Colonic mucosa (tissue), 4 donors: ENCODE measurements at regions of chr9 and their contacts with region 1.

Region 1: DNA sequence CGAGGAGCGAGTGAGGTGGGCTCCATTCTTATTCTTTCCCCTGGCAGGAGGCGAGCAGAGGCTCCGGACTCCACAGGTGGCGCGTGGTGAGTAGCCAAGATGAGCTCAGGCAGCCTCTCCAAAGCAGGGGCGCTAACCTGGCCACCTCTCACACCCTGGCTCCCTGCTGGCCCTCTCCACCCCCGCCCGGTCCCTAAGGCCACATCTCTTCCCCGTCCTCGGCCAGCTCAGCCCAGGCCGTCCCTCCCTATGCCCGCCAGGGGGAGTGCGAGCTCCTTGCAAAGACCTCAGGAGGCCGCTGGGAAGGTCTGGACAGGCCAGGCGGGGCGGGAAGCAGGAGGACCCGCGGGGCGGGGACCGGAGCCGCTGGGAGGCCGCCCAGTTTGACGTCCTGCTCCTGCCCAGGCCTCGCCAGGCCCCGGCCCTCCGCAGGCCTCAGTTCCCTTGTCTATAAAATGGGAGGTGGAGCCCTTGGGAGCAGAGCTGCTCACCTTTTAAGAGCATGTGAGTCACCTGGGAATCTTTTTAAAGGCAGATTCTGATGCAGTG is 46.3 kb upstream of the GGTA1 start:
- DNase-seq: peak; percentile 96
- H3K4me3 ChIP-seq: no peak overlapping the region
- H3K27ac ChIP-seq: no peak overlapping the region
- H3K4me1 ChIP-seq: peaks cover 4% of the 10 kb centered on the region
- H3K27me3 ChIP-seq: no peaks in the 10 kb centered on the region
- CTCF ChIP-seq: peak; percentile 79

Region 2: GRCh38 chr9:121686930-121687541 is 141.1 kb after region 1 on chr9:
- intact Hi-C with region 1: loop called (anchors 5 kb)
- DNase-seq: peak; percentile 90
- H3K4me3 ChIP-seq: no peak overlapping the region
- H3K27ac ChIP-seq: no peak overlapping the region
- H3K4me1 ChIP-seq: peaks cover 3% of the 10 kb centered on the region
- H3K27me3 ChIP-seq: no peaks in the 10 kb centered on the region
- CTCF ChIP-seq: peak; percentile 90

Region 3: DNA sequence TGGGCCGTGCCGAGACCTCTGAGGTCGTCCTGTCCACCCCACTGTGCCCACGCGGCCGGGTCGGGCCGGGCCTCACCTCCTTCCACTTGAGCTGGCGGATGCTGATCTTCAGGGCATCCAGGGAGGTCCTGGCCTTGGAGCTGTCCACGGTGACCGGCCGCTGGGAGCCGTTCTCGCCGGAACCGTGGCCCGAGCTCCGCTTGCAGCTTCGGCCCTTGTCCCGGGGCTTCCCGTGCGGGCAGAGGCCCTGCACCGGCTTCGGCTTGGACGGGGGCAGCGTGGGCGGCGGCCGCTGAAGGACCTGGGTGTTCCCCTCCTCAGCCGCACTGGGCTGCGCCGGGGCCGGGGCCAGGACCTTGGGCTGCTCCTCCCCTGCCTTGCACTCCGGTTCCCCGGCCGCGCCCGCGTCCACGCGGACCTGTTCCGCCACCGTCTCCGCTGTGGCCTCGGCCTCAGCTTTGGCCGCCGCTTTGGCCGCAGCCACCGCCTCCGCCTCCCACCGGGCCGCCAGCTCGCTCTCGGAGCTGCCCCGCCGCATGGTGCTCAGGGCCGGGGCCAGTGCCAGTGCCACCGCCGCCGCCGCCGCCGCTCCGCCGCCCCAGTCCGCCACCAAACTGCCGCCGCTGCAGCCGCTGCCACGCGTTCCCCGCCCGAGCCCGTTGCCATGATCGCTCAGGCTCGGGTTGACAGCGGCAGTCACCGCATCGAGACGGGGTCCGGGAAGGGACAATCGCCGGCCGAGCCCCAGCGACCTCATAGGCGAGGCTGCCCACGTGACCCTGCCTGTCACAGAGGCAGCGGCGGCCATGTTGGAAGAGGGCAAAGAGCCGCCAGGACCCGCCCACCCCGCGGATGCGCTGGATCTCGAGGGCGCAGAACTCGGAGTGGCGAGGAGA is 546.9 kb after region 1 on chr9 and contains the start of gene TTLL11:
- intact Hi-C with region 1: loop called (anchors 10 kb)
- DNase-seq: peak; percentile 96
- H3K4me3 ChIP-seq: peak within 1 kb of the TSS; percentile 66
- H3K27ac ChIP-seq: peak within 1 kb of the TSS; percentile 72
- H3K4me1 ChIP-seq: peaks cover 10% of the 10 kb centered on the region
- H3K27me3 ChIP-seq: no peaks in the 10 kb centered on the region
- CTCF ChIP-seq: no peak
- total RNA-seq, gene TTLL11: 5.1 to 5.5 TPM